Activated CD4-positive, alpha-beta T cell treated with anti-CD3 and anti-CD28 coated beads for 36 hours (primary cell): ENCODE measurements at regions of chr17 and their contacts with region 1.

Region 1: GRCh38 chr17:63549946-63550807 is at the start of gene DCAF7:
- DNase-seq: peak; percentile 100
- ATAC-seq: peak; percentile 94
- H3K4me3 Mint-ChIP-seq: peak within 1 kb of the TSS; percentile 91
- H3K27ac Mint-ChIP-seq: peak within 1 kb of the TSS; percentile 96
- H3K4me1 Mint-ChIP-seq: peaks cover 32% of the 10 kb centered on the region
- H3K27me3 Mint-ChIP-seq: no peaks in the 10 kb centered on the region
- total RNA-seq, gene DCAF7: 106 to 117 TPM

Region 2: DNA sequence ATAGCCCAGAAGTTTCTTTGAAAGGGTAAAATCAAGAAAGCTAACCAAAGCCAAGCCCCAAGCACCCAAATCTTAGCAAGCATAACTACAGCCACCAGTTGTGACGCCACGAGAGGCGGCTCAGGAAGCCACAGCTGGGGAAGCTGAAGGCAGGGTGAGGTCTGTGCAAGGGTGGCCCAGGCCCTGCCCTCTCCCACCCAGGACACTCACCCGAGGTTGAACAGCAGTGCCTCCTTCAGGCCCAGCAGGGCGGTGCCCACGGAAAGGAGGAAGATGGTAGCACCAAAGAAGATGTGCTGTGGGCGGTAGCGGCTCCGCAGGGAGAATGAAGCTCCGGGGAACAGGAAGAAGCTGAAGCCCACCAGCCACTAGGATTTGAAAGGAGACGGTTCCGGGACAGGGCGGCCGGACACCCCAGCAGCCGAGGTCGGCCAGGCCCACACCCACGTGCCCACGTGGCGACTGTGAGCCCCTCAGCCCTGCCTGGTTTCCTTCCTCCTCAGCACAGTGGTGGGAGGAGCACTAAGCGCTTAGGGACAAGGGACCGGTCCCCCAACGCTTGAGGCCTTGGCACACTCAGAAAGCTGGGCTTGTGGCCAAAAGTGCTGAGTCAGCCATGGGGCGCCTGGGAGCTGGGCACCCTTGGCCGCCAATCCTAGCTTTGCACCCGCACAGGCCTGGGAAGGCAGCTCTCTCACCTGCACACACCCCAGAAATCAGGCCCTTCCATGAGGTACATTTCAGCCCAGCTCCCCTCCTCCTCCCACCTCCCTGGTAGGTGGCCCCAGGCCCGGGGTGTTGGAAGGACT is 115.1 kb before region 1 on chr17:
- CTCF ChIA-PET with region 1: no interaction called
- POLR2A ChIA-PET with region 1: no interaction called
- intact Hi-C with region 1: loop called in 1 of 2 experiments (anchors 2 kb)
- DNase-seq: peak; percentile 46
- ATAC-seq: no peak
- H3K4me3 Mint-ChIP-seq: no peak overlapping the region
- H3K27ac Mint-ChIP-seq: peak overlapping the region; percentile 12
- H3K4me1 Mint-ChIP-seq: peaks cover 16% of the 10 kb centered on the region
- H3K27me3 Mint-ChIP-seq: no peaks in the 10 kb centered on the region

Region 3: DNA sequence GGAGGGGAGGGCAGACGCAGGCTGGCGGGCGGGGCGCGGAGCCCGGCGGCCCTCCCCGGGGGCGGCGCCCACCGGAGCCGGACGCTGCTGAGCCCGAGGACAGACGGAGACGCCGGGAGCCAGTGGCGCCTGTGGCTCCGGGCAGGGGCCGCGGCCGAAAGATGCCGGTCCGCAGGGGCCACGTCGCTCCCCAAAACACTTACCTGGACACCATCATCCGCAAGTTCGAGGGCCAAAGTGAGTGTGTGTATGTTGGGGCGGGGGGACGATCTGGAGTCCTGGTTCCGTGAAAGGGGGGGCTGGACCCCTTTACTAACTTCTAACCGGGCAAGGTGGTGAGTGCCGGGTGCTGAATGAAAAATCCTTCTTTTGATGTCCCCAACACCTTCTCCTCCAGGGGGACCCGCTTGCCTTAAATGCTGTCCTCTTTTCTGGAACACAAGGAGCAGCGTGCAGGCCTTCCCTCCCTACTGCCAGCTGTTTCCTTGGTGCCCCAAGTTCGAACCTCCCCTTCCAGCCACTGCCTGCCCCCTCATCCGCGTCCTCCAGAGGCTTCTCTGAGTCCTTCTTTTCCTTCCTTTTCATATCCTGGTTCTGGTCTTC is 26.8 kb before region 1 on chr17 and contains the start of gene KCNH6:
- CTCF ChIA-PET with region 1: interaction called, 3 read pairs
- POLR2A ChIA-PET with region 1: interaction called, 3 read pairs
- intact Hi-C with region 1: loop called in 1 of 2 experiments (anchors 2 kb)
- DNase-seq: no peak
- ATAC-seq: no peak
- H3K4me3 Mint-ChIP-seq: no peak within 1 kb of the TSS
- H3K27ac Mint-ChIP-seq: no peak within 1 kb of the TSS
- H3K4me1 Mint-ChIP-seq: peaks cover 3% of the 10 kb centered on the region
- H3K27me3 Mint-ChIP-seq: peaks cover 10% of the 10 kb centered on the region
- total RNA-seq, gene KCNH6: not detected

Region 4: DNA sequence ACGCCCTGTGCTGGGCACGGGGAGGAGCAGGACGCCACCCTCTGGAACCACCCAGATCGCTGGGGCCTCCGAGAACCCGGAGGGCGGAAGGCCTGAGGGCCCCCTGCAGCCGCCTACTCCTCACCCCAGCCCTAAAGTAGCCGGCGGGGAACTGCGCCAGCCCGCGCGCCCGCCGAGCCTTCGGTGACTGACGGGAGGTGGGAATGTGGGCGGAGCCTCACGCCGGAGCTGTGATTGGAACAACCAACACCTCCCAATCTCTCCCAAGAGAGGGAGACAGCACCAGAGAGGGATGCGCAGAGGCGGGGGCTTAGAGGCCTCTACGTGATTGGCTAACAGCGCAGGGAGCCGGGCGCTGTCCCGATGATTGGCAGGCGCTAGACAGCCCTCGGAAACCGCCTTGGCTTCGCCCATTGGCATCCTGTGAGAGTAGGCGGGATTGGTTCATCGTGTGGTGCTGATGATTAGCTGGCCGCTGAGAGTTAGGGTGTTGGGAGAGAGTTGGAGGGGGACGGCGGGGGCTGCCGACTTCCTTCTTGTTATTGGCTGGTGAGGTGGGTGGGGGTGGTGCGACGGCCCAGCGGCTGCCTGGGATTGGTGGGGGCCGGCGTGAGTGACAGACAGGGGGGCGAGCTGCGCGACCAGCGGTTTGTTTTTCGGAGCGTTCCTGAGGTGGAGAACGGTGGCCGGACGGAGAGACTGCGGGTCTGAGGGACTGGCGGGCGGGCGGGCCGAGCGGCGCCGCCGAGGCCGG is 71.8 kb after region 1 on chr17 and contains the start of gene MAP3K3:
- CTCF ChIA-PET with region 1: interaction called, 3 read pairs
- POLR2A ChIA-PET with region 1: interaction called, 5 read pairs
- intact Hi-C with region 1: loop called in 1 of 2 experiments (anchors 1 kb)
- DNase-seq: peak; percentile 98
- ATAC-seq: peak; percentile 93
- H3K4me3 Mint-ChIP-seq: peak within 1 kb of the TSS; percentile 88
- H3K27ac Mint-ChIP-seq: peak within 1 kb of the TSS; percentile 90
- H3K4me1 Mint-ChIP-seq: peaks cover 36% of the 10 kb centered on the region
- H3K27me3 Mint-ChIP-seq: no peaks in the 10 kb centered on the region
- total RNA-seq, gene MAP3K3: 22.4 to 22.9 TPM

Region 5: GRCh38 chr17:63773381-63774140 is 223.4 kb after region 1 on chr17 and contains the start of gene CCDC47:
- CTCF ChIA-PET with region 1: no interaction called
- POLR2A ChIA-PET with region 1: no interaction called
- intact Hi-C with region 1: loop called in 1 of 2 experiments (anchors 1 kb)
- DNase-seq: peak; percentile 99
- ATAC-seq: peak; percentile 83
- H3K4me3 Mint-ChIP-seq: peak within 1 kb of the TSS; percentile 98
- H3K27ac Mint-ChIP-seq: peak within 1 kb of the TSS; percentile 97
- H3K4me1 Mint-ChIP-seq: peaks cover 57% of the 10 kb centered on the region
- H3K27me3 Mint-ChIP-seq: no peaks in the 10 kb centered on the region
- total RNA-seq, gene CCDC47: 76.9 to 82.3 TPM

Region 6: GRCh38 chr17:63842540-63843386 is 292.6 kb after region 1 on chr17 and contains the start of gene SMARCD2:
- CTCF ChIA-PET with region 1: no interaction called
- POLR2A ChIA-PET with region 1: interaction called, 7 read pairs
- intact Hi-C with region 1: loop called (anchors 1 to 10 kb)
- DNase-seq: peak; percentile 100
- ATAC-seq: peak; percentile 89
- H3K4me3 Mint-ChIP-seq: peak within 1 kb of the TSS; percentile 98
- H3K27ac Mint-ChIP-seq: peak within 1 kb of the TSS; percentile 97
- H3K4me1 Mint-ChIP-seq: peaks cover 35% of the 10 kb centered on the region
- H3K27me3 Mint-ChIP-seq: no peaks in the 10 kb centered on the region
- total RNA-seq, gene SMARCD2: 100.0 to 101 TPM